Heart right ventricle (tissue), 16 donors: ENCODE measurements at regions of chr2 and their contacts with region 1.

Region 1: GRCh38 chr2:218568190-218569037 is at the starts of genes CNOT9 and USP37:
- DNase-seq: peak; percentile 100
- ATAC-seq: peak; percentile 97 to 99 (median 98)
- H3K4me3 ChIP-seq: peak within 1 kb of the TSS; percentile 61 to 96 (median 84)
- H3K27ac ChIP-seq: peak within 1 kb of the TSS; percentile 68 to 97 (median 94)
- H3K4me1 ChIP-seq: peaks cover 8 to 49% (median 45%) of the 10 kb centered on the region in 9 donors
- H3K27me3 ChIP-seq: no peaks in the 10 kb centered on the region
- CTCF ChIP-seq: no peak
- total RNA-seq, gene CNOT9: 15.7 to 28.2 (median 21.1) TPM
- total RNA-seq, gene USP37: 6.3 to 11.1 (median 8.5) TPM

Region 2: DNA sequence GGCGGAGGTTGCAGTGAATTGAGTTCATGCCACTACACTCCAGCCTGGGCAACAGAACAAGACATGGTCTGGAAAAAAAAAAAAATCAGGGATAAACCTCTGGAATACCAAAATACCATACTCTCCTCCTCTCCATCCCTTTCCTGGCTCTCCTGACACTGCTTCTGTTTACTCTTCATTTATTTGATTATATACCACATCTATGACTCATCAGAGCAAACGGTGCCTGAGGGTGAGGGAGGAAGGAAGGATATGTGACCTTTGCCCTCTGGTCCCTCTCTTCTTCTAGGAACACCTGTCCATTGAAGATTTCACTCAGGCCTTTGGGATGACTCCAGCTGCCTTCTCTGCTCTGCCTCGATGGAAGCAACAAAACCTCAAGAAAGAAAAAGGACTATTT is 119.5 kb before region 1 on chr2:
- intact Hi-C with region 1: no loop called
- DNase-seq: no peak
- ATAC-seq: no peak
- H3K4me3 ChIP-seq: no peak overlapping the region
- H3K27ac ChIP-seq: no peak overlapping the region
- H3K4me1 ChIP-seq: no peaks in the 10 kb centered on the region
- H3K27me3 ChIP-seq: no peaks in the 10 kb centered on the region
- CTCF ChIP-seq: no peak

Region 3: DNA sequence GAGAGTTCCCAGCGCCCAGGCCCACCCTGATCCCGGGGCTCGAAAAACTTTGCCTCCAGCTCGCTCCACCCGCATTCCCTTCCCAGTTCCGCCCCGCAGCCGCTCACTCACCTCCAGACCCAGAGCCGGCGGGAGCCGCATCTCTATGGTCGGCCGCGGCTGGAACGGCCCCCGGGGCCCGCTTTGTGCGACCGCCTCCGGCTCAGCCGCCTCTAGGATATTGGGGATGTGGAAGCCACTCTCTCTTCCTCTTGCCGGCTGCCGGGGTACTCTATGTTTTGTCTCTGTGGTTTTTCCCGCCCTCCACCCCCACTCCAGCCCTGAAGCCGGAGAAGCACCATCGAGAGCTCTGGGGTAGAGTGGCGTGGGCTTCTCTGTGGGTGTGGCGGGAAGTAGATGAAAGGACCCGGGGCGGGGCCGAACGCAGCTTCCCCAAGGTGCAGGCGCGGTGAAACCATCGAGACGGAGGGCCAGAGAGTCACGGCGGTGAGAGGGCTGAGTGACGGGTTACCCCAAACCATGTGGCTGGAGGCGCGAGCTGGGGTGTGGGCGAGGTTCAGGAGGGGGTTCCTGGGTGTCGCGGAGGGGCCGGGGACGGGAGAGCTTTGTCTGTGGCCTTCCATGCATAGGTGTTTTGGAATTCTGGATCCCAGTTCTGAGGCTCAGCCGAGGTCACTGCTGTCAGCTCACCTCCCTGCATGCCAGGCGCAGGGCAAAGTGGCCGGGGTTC is 91.0 kb after region 1 on chr2 and contains the starts of genes BCS1L and ZNF142:
- intact Hi-C with region 1: loop called in 5 of 10 experiments (anchors 5 to 10 kb)
- DNase-seq: peak; percentile 92 to 96
- ATAC-seq: peak; percentile 91 to 98 (median 97)
- H3K4me3 ChIP-seq: peak within 1 kb of the TSS; percentile 79 to 97 (median 92)
- H3K27ac ChIP-seq: peak within 1 kb of the TSS; percentile 54 to 88 (median 81)
- H3K4me1 ChIP-seq: peaks cover 9 to 43% (median 32%) of the 10 kb centered on the region in 9 donors
- H3K27me3 ChIP-seq: no peaks in the 10 kb centered on the region
- CTCF ChIP-seq: no peak
- total RNA-seq, gene BCS1L: 34.8 to 53.8 (median 44.6) TPM
- total RNA-seq, gene ZNF142: 17.9 to 29.5 (median 22.9) TPM